A673 (cell line): ENCODE measurements at regions of chr11 and their contacts with region 1.

Region 1: DNA sequence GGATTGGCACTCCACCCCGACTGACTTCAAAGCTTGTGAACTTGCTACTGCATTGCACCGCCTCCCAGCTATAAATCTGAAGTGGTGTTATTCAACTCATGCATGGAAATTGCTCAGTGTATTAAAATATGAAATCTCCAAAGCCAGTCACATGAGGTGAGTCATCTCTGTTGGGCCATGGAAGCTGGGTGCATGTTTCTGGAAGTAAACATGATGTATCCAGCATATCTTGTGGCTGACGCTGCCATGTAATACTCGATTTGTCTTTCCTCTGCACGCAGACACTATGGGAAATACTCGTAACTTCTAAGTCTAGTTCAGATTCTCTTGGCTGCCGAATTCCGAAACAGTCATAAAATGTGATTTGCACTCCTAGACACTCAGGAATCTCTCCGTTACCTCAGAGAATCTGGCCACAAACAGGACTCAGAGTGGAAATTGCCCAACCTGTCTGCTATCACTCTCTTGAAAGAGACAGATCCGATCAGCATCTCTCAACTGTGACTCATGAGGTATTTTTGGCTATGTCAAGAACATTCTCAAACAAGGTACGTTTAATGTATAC is 155.0 kb upstream of the MPPED2 start:
- DNase-seq: peak; percentile 46
- H3K4me3 ChIP-seq: no peak overlapping the region
- H3K27ac ChIP-seq: no peak overlapping the region
- H3K4me1 ChIP-seq: no peaks in the 10 kb centered on the region
- H3K27me3 ChIP-seq: no peaks in the 10 kb centered on the region
- CTCF ChIP-seq: no peak

Region 2: DNA sequence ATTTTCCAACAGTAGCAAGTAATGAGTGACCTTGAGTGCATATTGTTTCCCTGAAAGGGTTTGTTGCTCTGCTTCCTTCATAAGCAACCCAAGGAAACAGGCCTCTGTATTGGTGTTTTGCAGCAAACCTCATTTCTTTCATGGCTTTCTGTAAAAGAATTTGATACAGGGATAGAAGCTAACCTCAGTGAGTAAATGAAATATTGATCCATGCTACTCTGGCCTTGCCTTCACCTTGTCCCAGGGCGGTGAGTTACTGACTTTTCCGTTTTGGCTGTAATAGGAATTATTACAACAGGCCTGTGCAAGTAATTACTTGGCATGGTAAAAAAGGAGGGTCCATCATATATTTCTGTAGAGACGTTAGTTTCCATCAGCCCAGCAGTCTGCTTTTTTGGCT is 24.1 kb before region 1 on chr11:
- CTCF ChIA-PET with region 1: no interaction called
- POLR2A ChIA-PET with region 1: no interaction called
- intact Hi-C with region 1: loop called (anchors 2 kb)
- DNase-seq: no peak
- H3K4me3 ChIP-seq: no peak overlapping the region
- H3K27ac ChIP-seq: no peak overlapping the region
- H3K4me1 ChIP-seq: no peaks in the 10 kb centered on the region
- H3K27me3 ChIP-seq: no peaks in the 10 kb centered on the region
- CTCF ChIP-seq: no peak

Region 3: DNA sequence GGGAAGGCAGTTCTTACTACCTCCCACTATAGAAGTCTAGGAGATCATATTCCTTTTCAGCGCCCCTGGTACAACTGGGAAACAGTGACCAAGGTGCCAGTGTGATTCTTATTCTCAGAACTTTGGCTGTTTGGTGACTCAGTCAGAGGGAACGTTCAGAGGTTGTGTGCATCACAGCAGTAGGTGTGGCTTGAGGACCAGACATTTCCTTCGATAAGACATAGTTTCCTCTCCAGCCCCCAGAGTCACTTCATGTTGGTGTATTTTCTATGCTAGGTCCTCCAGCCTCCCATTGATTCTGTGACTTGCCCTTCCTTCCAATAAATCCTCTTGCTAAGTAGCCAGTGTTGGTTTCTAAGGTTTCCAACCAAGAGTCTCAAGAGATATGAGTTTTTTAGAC is 16.9 kb after region 1 on chr11:
- CTCF ChIA-PET with region 1: interaction called, 3 read pairs
- POLR2A ChIA-PET with region 1: interaction called, 10 read pairs
- intact Hi-C with region 1: no loop called
- DNase-seq: no peak
- H3K4me3 ChIP-seq: no peak overlapping the region
- H3K27ac ChIP-seq: no peak overlapping the region
- H3K4me1 ChIP-seq: peaks cover 45% of the 10 kb centered on the region
- H3K27me3 ChIP-seq: no peaks in the 10 kb centered on the region
- CTCF ChIP-seq: no peak

Region 4: GRCh38 chr11:30889143-30889794 is 148.1 kb after region 1 on chr11:
- CTCF ChIA-PET with region 1: no interaction called
- POLR2A ChIA-PET with region 1: no interaction called
- intact Hi-C with region 1: no loop called
- DNase-seq: peak; percentile 40
- H3K4me3 ChIP-seq: no peak overlapping the region
- H3K27ac ChIP-seq: no peak overlapping the region
- H3K4me1 ChIP-seq: no peaks in the 10 kb centered on the region
- H3K27me3 ChIP-seq: peaks cover 2% of the 10 kb centered on the region
- CTCF ChIP-seq: no peak